ENCODE measurements at regions of chr2 and their contacts with region 1.

Region 1: GRCh38 chr2:224357098-224357901 is 44.6 kb downstream of the FAM124B start:
- DNase-seq: peak; percentile 41
- H3K4me3 ChIP-seq: no peak overlapping the region
- H3K27ac ChIP-seq: no peak overlapping the region
- H3K4me1 ChIP-seq: peaks cover 15% of the 10 kb centered on the region
- H3K27me3 ChIP-seq: no peaks in the 10 kb centered on the region
- CTCF ChIP-seq: peak; percentile 72 to 80

Region 2: DNA sequence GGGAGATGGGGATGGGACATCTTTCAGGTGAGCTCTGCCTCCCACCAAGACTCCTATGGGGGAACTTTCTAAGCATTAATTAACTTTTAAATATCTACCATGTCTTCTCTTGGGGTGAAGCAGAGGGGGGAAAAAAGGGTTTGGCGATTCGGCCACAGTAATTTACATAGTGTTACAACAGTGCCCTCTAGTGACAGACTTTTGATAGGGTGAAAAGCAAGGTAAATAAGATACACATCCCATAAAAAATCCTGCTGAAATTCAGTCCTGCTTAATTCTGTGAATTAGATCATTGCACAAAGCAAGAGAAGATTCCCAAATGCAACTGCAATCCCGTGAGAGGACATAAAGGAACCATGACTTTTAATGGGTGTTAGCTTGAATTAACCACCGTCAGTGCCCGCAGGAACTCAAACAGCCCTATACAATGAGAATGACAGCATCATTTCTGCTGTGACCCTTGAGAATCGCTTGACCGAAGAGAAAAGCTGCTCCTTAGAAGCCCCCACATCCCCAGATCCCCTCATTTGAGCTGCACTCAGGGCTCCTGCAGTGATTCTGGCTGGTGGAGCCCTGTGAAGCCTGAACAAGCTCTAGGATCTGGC is 11.8 kb after region 1 on chr2:
- CTCF ChIA-PET with region 1: no interaction called
- dilution Hi-C with region 1: no loop called
- in situ Hi-C with region 1: no loop called
- intact Hi-C with region 1: loop called (anchors 1 kb)
- DNase-seq: peak; percentile 20
- H3K4me3 ChIP-seq: no peak overlapping the region
- H3K27ac ChIP-seq: no peak overlapping the region
- H3K4me1 ChIP-seq: no peaks in the 10 kb centered on the region
- H3K27me3 ChIP-seq: no peaks in the 10 kb centered on the region
- CTCF ChIP-seq: peak; percentile 64 to 70

Region 3: GRCh38 chr2:224401641-224402342 is 44.5 kb after region 1 on chr2 and contains the start of gene FAM124B:
- CTCF ChIA-PET with region 1: no interaction called
- dilution Hi-C with region 1: no loop called
- in situ Hi-C with region 1: no loop called
- intact Hi-C with region 1: no loop called
- DNase-seq: no peak
- H3K4me3 ChIP-seq: no peak within 1 kb of the TSS
- H3K27ac ChIP-seq: no peak within 1 kb of the TSS
- H3K4me1 ChIP-seq: no peaks in the 10 kb centered on the region
- H3K27me3 ChIP-seq: no peaks in the 10 kb centered on the region
- CTCF ChIP-seq: no peak
- total RNA-seq, gene FAM124B: not detected

Region 4: GRCh38 chr2:224449212-224450147 is 92.2 kb after region 1 on chr2:
- CTCF ChIA-PET with region 1: no interaction called
- dilution Hi-C with region 1: no loop called
- in situ Hi-C with region 1: no loop called
- intact Hi-C with region 1: loop called (anchors 1 kb)
- DNase-seq: peak; percentile 12
- H3K4me3 ChIP-seq: no peak overlapping the region
- H3K27ac ChIP-seq: no peak overlapping the region
- H3K4me1 ChIP-seq: no peaks in the 10 kb centered on the region
- H3K27me3 ChIP-seq: no peaks in the 10 kb centered on the region
- CTCF ChIP-seq: peak; percentile 62 to 68

Region 5: GRCh38 chr2:224650815-224651439 is 293.6 kb after region 1 on chr2:
- CTCF ChIA-PET with region 1: no interaction called
- dilution Hi-C with region 1: no loop called
- in situ Hi-C with region 1: loop called (anchors 5 kb)
- intact Hi-C with region 1: loop called (anchors 1 kb)
- DNase-seq: peak; percentile 31
- H3K4me3 ChIP-seq: no peak overlapping the region
- H3K27ac ChIP-seq: no peak overlapping the region
- H3K4me1 ChIP-seq: no peaks in the 10 kb centered on the region
- H3K27me3 ChIP-seq: no peaks in the 10 kb centered on the region
- CTCF ChIP-seq: peak; percentile 66 to 81

Region 6: GRCh38 chr2:224764565-224765236 is 407.4 kb after region 1 on chr2:
- CTCF ChIA-PET with region 1: no interaction called
- dilution Hi-C with region 1: no loop called
- in situ Hi-C with region 1: loop called in 1 of 2 experiments (anchors 25 kb)
- intact Hi-C with region 1: no loop called
- DNase-seq: no peak
- H3K4me3 ChIP-seq: no peak overlapping the region
- H3K27ac ChIP-seq: no peak overlapping the region
- H3K4me1 ChIP-seq: no peaks in the 10 kb centered on the region
- H3K27me3 ChIP-seq: no peaks in the 10 kb centered on the region
- CTCF ChIP-seq: no peak

Region 7: GRCh38 chr2:224778474-224778877 is 421.2 kb after region 1 on chr2:
- CTCF ChIA-PET with region 1: no interaction called
- dilution Hi-C with region 1: no loop called
- in situ Hi-C with region 1: loop called in 1 of 2 experiments (anchors 25 kb)
- intact Hi-C with region 1: loop called (anchors 1 kb)
- DNase-seq: peak; percentile 53
- H3K4me3 ChIP-seq: no peak overlapping the region
- H3K27ac ChIP-seq: no peak overlapping the region
- H3K4me1 ChIP-seq: no peaks in the 10 kb centered on the region
- H3K27me3 ChIP-seq: no peaks in the 10 kb centered on the region
- CTCF ChIP-seq: peak; percentile 76 to 81

Region 8: DNA sequence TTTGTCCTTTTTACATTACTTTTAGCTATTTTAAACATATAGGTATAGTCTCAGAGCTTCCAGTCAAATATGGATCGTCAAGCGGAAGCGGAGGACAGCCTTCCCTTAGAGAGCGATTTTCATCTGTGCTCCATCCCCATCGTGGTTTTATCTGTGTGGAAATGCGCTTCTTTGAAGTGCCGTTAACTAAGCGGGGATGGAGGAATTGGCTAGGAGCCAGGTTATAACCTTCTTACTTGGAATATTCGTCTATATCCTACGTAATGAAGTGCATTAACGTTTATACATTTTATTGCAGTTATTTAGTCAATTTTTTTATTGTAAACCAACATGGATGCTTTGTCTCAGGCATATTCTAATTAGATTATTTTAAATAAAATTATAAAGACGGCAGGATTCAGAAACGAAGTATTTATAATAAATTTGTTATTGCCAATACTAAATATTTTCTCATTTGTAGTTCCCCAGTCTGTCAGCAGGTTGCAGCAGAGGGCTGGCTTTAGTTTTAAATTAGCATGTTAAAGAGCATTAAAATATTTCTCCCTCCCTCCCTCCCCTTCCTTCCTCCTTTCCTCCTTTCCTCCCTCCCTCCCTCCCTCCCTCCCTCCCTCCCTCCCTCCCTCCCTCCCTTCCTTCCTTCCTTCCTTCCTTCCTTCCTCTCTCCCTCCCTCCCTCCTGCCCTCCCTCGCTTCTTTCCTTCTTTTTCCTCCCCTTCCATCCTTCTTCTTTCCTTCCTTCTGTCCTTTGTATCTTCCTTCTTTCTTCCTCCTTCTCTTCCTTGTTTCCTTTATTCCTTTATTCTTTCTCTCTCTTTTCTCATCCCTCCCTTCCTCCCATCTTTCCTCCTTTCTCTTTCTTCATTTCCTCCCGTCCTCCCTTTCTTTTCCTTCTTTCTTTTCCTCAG is 765.5 kb after region 1 on chr2:
- CTCF ChIA-PET with region 1: no interaction called
- dilution Hi-C with region 1: no loop called
- in situ Hi-C with region 1: no loop called
- intact Hi-C with region 1: loop called (anchors 10 kb)
- DNase-seq: no peak
- H3K4me3 ChIP-seq: no peak overlapping the region
- H3K27ac ChIP-seq: no peak overlapping the region
- H3K4me1 ChIP-seq: peaks cover 10% of the 10 kb centered on the region
- H3K27me3 ChIP-seq: no peaks in the 10 kb centered on the region
- CTCF ChIP-seq: peak; percentile 56 to 58